ENCODE measurements at regions of chr6 and their contacts with region 1.

Region 1: GRCh38 chr6:32744776-32745175 is 3.6 kb downstream of the HLA-DQA2 start:
- DNase-seq: no peak
- ATAC-seq: no peak
- H3K4me3 ChIP-seq: no peak overlapping the region
- H3K4me3 Mint-ChIP-seq: no peak overlapping the region
- H3K27ac ChIP-seq: no peak overlapping the region
- H3K27ac Mint-ChIP-seq: no peak overlapping the region
- H3K4me1 ChIP-seq: no peaks in the 10 kb centered on the region
- H3K4me1 Mint-ChIP-seq: no peaks in the 10 kb centered on the region
- H3K27me3 ChIP-seq: peaks cover 2 to 3% of the 10 kb centered on the region in 2 experiments
- H3K27me3 Mint-ChIP-seq: peaks cover 39% of the 10 kb centered on the region
- CTCF ChIP-seq: no peak

Region 2: DNA sequence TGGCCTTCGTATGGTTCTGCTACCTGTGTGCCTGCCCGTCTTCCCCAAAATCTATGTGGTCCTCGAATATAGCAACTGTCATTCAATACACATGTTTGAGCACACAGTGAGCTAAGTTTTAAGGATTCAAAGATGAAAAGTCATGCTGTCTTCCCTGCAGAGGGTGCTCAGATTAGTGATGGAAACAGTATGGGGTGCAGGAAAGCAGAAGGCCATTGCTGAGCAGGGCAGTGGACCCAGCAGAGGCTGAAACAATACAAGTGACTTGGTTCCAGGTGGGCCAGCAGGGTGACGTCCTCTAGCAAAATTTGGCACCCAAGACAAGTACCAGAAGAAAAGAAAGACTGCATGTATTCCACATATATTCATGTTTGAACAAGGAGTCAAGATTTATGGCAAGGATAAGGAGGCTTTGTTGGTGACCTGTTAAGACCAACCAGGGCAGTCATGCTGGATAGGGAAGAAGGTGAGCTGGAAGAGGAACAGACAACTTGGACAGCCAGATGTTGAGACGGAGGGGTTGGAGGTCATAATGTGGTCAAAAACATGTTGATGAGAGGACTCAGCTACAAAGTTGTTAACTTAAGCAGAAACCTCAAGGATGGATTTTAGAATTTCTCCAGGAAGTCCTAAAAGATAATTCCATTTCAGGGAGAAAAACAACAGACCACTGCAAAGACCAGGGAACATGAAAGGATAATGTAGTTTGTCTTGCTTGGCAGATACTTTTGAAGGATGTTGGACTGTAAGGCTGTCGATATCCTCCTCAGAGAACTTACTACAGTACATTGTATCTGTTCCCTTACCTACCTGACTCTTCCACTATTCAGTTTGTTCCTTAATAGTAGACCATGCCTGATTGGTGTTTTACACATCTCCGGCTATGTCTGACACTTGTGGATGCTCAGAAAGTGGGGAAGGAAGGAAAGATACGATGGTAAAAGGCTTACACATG is 105.1 kb before region 1 on chr6:
- CTCF ChIA-PET with region 1: no interaction called
- POLR2A ChIA-PET with region 1: no interaction called
- intact Hi-C with region 1: loop called in 1 of 2 experiments (anchors 2 kb)
- DNase-seq: no peak
- ATAC-seq: no peak
- H3K4me3 ChIP-seq: no peak overlapping the region
- H3K4me3 Mint-ChIP-seq: no peak overlapping the region
- H3K27ac ChIP-seq: no peak overlapping the region
- H3K27ac Mint-ChIP-seq: no peak overlapping the region
- H3K4me1 ChIP-seq: no peaks in the 10 kb centered on the region
- H3K4me1 Mint-ChIP-seq: peaks cover 12% of the 10 kb centered on the region
- H3K27me3 ChIP-seq: no peaks in the 10 kb centered on the region
- H3K27me3 Mint-ChIP-seq: peaks cover 20% of the 10 kb centered on the region
- CTCF ChIP-seq: no peak

Region 3: DNA sequence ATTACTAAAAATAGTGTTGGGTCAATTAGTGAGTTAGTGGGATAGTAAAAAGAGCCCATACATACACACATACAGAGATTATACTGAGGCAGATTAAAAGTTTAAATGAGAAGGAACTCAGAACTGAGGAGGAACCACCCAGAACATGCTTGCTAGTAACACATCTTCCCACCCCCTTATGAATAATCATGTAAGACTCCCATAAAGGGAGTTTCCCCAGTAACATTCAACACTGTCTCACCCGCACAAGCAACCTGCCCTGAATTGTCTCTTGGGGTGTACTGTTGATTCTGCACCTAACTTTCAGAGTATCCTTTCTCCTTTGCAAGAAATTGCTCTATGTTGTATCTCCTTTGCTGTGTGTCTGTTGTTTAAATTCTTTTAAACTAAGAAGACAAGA is 29.6 kb after region 1 on chr6:
- CTCF ChIA-PET with region 1: no interaction called
- POLR2A ChIA-PET with region 1: no interaction called
- intact Hi-C with region 1: no loop called
- DNase-seq: no peak
- ATAC-seq: no peak
- H3K4me3 ChIP-seq: no peak overlapping the region
- H3K4me3 Mint-ChIP-seq: no peak overlapping the region
- H3K27ac ChIP-seq: no peak overlapping the region
- H3K27ac Mint-ChIP-seq: no peak overlapping the region
- H3K4me1 ChIP-seq: no peaks in the 10 kb centered on the region
- H3K4me1 Mint-ChIP-seq: no peaks in the 10 kb centered on the region
- H3K27me3 ChIP-seq: no peaks in the 10 kb centered on the region
- H3K27me3 Mint-ChIP-seq: peaks cover 25% of the 10 kb centered on the region
- CTCF ChIP-seq: no peak

Measured in CD8-positive, alpha-beta T cell (primary cell).